Activated CD8-positive, alpha-beta T cell treated with anti-CD3 and anti-CD28 coated beads for 36 hours (primary cell): ENCODE measurements at regions of chr6 and their contacts with region 1.

Region 1: GRCh38 chr6:16761471-16762267 is 409 bp upstream of the ATXN1 start:
- DNase-seq: peak; percentile 91
- ATAC-seq: peak; percentile 64
- H3K4me3 Mint-ChIP-seq: peak overlapping the region; percentile 98
- H3K27ac Mint-ChIP-seq: peak overlapping the region; percentile 99
- H3K4me1 Mint-ChIP-seq: peaks cover 58% of the 10 kb centered on the region
- H3K27me3 Mint-ChIP-seq: no peaks in the 10 kb centered on the region
- CTCF ChIP-seq: no peak

Region 2: GRCh38 chr6:15804174-15805154 is 957.2 kb before region 1 on chr6:
- CTCF ChIA-PET with region 1: no interaction called
- POLR2A ChIA-PET with region 1: no interaction called
- intact Hi-C with region 1: no loop called
- DNase-seq: no peak
- ATAC-seq: no peak
- H3K4me3 Mint-ChIP-seq: no peak overlapping the region
- H3K27ac Mint-ChIP-seq: no peak overlapping the region
- H3K4me1 Mint-ChIP-seq: no peaks in the 10 kb centered on the region
- H3K27me3 Mint-ChIP-seq: no peaks in the 10 kb centered on the region
- CTCF ChIP-seq: no peak

Region 3: GRCh38 chr6:16332175-16332542 is 429.5 kb before region 1 on chr6:
- CTCF ChIA-PET with region 1: interaction called, 25 read pairs
- POLR2A ChIA-PET with region 1: interaction called, 3 read pairs
- intact Hi-C with region 1: loop called (anchors 2 kb)
- DNase-seq: peak; percentile 90
- ATAC-seq: peak; percentile 99
- H3K4me3 Mint-ChIP-seq: no peak overlapping the region
- H3K27ac Mint-ChIP-seq: no peak overlapping the region
- H3K4me1 Mint-ChIP-seq: peaks cover 3% of the 10 kb centered on the region
- H3K27me3 Mint-ChIP-seq: no peaks in the 10 kb centered on the region
- CTCF ChIP-seq: peak; percentile 81

Region 4: GRCh38 chr6:16481697-16482399 is 279.8 kb before region 1 on chr6:
- CTCF ChIA-PET with region 1: interaction called, 9 read pairs
- POLR2A ChIA-PET with region 1: interaction called, 8 read pairs
- intact Hi-C with region 1: loop called (anchors 2 kb)
- DNase-seq: peak; percentile 84
- ATAC-seq: peak; percentile 79
- H3K4me3 Mint-ChIP-seq: peak overlapping the region; percentile 6
- H3K27ac Mint-ChIP-seq: peak overlapping the region; percentile 96
- H3K4me1 Mint-ChIP-seq: peaks cover 86% of the 10 kb centered on the region
- H3K27me3 Mint-ChIP-seq: no peaks in the 10 kb centered on the region
- CTCF ChIP-seq: no peak

Region 5: DNA sequence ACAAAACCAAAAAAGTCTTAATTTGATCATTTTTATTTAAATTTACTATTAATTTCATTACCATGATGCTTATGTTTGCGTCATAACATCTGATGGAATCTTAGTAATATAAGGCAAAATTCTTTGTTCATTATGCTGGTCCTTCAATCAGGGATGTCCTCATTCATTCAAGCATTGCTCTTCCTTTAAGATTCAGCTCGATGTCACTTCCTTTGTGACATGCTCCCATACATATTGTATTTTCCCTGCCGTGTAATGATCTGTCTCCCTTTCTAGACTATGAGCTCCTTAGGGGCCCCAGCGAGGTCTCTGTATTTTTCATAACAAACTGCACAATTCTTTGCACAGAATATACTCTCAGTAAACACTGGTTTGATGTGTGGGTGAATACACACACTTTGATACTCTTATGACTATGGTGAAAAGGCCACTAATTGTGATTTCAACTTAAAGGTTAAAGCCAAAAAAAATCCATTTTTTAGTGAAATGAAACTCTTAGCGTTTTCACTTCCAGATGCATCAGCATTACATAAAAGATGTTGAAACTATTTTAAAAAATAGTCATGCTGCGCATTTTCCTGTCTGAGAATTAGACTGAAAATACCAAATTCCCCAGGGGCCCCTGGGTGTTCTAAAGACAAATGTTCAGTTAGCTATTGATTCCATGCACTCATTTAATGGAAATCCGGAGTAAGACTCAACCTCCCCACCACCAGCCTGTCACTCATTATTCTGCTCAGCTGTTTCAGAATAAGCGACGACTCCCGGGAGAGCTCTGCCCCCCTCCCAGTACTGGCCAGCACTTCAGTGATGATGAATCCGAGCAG is 170.1 kb before region 1 on chr6:
- CTCF ChIA-PET with region 1: interaction called, 8 read pairs
- POLR2A ChIA-PET with region 1: interaction called, 7 read pairs
- intact Hi-C with region 1: loop called (anchors 5 kb)
- DNase-seq: peak; percentile 41
- ATAC-seq: peak; percentile 74
- H3K4me3 Mint-ChIP-seq: peak overlapping the region; percentile 21
- H3K27ac Mint-ChIP-seq: peak overlapping the region; percentile 70
- H3K4me1 Mint-ChIP-seq: peaks cover 22% of the 10 kb centered on the region
- H3K27me3 Mint-ChIP-seq: no peaks in the 10 kb centered on the region
- CTCF ChIP-seq: no peak

Region 6: GRCh38 chr6:16690608-16691198 is 71.0 kb before region 1 on chr6:
- CTCF ChIA-PET with region 1: interaction called, 58 read pairs
- POLR2A ChIA-PET with region 1: interaction called, 11 read pairs
- intact Hi-C with region 1: loop called (anchors 5 kb)
- DNase-seq: peak; percentile 77
- ATAC-seq: peak; percentile 70
- H3K4me3 Mint-ChIP-seq: peak overlapping the region; percentile 17
- H3K27ac Mint-ChIP-seq: peak overlapping the region; percentile 92
- H3K4me1 Mint-ChIP-seq: peaks cover 86% of the 10 kb centered on the region
- H3K27me3 Mint-ChIP-seq: no peaks in the 10 kb centered on the region
- CTCF ChIP-seq: no peak

Region 7: GRCh38 chr6:16731478-16732051 is 30.1 kb before region 1 on chr6:
- CTCF ChIA-PET with region 1: interaction called, 16 read pairs
- POLR2A ChIA-PET with region 1: interaction called, 10 read pairs
- intact Hi-C with region 1: no loop called
- DNase-seq: peak; percentile 73
- ATAC-seq: peak; percentile 85
- H3K4me3 Mint-ChIP-seq: peak overlapping the region; percentile 65
- H3K27ac Mint-ChIP-seq: peak overlapping the region; percentile 87
- H3K4me1 Mint-ChIP-seq: peaks cover 68% of the 10 kb centered on the region
- H3K27me3 Mint-ChIP-seq: no peaks in the 10 kb centered on the region
- CTCF ChIP-seq: no peak

Region 8: GRCh38 chr6:16810411-16810810 is 48.7 kb after region 1 on chr6:
- CTCF ChIA-PET with region 1: no interaction called
- POLR2A ChIA-PET with region 1: no interaction called
- intact Hi-C with region 1: no loop called
- DNase-seq: no peak
- ATAC-seq: no peak
- H3K4me3 Mint-ChIP-seq: no peak overlapping the region
- H3K27ac Mint-ChIP-seq: no peak overlapping the region
- H3K4me1 Mint-ChIP-seq: peaks cover 3% of the 10 kb centered on the region
- H3K27me3 Mint-ChIP-seq: no peaks in the 10 kb centered on the region
- CTCF ChIP-seq: no peak